ENCODE measurements at regions of chr15 and their contacts with region 1.

Region 1: DNA sequence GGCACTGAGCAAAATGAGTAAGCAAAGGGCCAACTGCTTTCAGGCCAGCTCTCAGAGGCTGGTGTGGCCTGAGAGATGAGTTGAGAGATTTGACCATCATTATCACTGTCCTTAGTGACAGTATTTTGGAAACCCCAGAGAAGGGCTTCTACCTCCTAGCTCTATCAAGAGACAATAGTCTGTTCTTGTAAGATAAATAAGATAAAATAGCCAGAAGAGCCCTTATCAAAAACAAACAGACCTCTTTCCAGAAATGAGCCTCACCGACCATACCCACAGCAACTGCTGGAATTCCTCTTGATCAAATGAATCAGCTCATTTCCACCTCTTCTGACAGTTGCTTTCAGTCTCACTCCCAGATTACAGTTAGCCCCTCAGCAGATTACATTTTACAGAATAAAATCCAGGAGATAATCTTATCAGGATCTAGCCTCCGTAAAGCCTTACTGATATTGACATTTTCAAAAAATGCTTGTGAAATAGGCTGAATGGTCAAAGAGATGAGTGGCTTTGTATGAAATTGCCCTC is 4.5 kb downstream of the HDC start:
- DNase-seq: no peak
- ATAC-seq: no peak
- H3K4me3 Mint-ChIP-seq: peak overlapping the region; percentile 41
- H3K27ac Mint-ChIP-seq: peak overlapping the region; percentile 83
- H3K4me1 Mint-ChIP-seq: peaks cover 56% of the 10 kb centered on the region
- H3K27me3 Mint-ChIP-seq: no peaks in the 10 kb centered on the region

Region 2: DNA sequence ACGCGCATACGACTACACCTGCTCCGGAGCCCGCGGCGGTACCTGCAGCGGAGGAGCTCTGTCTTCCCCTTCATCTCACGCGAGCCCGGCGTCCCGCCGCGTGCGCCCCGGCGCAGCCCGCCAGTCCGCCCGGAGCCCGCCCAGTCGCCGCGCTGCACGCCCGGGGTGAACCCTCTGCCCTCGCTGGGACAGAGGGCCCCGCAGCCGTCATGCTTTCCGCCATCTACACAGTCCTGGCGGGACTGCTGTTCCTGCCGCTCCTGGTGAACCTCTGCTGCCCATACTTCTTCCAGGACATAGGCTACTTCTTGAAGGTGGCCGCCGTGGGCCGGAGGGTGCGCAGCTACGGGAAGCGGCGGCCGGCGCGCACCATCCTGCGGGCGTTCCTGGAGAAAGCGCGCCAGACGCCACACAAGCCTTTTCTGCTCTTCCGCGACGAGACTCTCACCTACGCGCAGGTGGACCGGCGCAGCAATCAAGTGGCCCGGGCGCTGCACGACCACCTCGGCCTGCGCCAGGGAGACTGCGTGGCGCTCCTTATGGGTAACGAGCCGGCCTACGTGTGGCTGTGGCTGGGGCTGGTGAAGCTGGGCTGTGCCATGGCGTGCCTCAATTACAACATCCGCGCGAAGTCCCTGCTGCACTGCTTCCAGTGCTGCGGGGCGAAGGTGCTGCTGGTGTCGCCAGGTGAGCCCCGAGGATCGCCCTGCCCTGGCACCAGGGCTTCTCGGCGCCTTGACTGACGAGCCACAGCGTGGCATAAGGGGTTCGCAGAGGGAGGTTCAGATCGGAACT is 78.6 kb before region 1 on chr15:
- POLR2A ChIA-PET with region 1: interaction called, 11 read pairs
- DNase-seq: peak; percentile 76
- ATAC-seq: peak; percentile 79
- H3K4me3 Mint-ChIP-seq: peak overlapping the region; percentile 94
- H3K27ac Mint-ChIP-seq: peak overlapping the region; percentile 89
- H3K4me1 Mint-ChIP-seq: peaks cover 18% of the 10 kb centered on the region
- H3K27me3 Mint-ChIP-seq: peaks cover 3% of the 10 kb centered on the region

Region 3: GRCh38 chr15:50247819-50248655 is 13.0 kb before region 1 on chr15:
- POLR2A ChIA-PET with region 1: interaction called, 43 read pairs
- DNase-seq: peak; percentile 68
- ATAC-seq: peak; percentile 100
- H3K4me3 Mint-ChIP-seq: peak overlapping the region; percentile 82
- H3K27ac Mint-ChIP-seq: peak overlapping the region; percentile 97
- H3K4me1 Mint-ChIP-seq: peaks cover 46% of the 10 kb centered on the region
- H3K27me3 Mint-ChIP-seq: no peaks in the 10 kb centered on the region

Measured in activated naive CD8-positive, alpha-beta T cell treated with anti-CD3 and anti-CD28 coated beads, Interleukin-2, amount 10 ng/mL, durations not matched to agents 7 days and 5 days (primary cell).